Dendritic cell treated with granulocyte-macrophage colony-stimulating factor and Interleukin-4, amounts not matched to agents 40 ng/mL and 50 ng/mL, for 4 days (primary cell): ENCODE measurements at regions of chr5 and their contacts with region 1.

Region 1: DNA sequence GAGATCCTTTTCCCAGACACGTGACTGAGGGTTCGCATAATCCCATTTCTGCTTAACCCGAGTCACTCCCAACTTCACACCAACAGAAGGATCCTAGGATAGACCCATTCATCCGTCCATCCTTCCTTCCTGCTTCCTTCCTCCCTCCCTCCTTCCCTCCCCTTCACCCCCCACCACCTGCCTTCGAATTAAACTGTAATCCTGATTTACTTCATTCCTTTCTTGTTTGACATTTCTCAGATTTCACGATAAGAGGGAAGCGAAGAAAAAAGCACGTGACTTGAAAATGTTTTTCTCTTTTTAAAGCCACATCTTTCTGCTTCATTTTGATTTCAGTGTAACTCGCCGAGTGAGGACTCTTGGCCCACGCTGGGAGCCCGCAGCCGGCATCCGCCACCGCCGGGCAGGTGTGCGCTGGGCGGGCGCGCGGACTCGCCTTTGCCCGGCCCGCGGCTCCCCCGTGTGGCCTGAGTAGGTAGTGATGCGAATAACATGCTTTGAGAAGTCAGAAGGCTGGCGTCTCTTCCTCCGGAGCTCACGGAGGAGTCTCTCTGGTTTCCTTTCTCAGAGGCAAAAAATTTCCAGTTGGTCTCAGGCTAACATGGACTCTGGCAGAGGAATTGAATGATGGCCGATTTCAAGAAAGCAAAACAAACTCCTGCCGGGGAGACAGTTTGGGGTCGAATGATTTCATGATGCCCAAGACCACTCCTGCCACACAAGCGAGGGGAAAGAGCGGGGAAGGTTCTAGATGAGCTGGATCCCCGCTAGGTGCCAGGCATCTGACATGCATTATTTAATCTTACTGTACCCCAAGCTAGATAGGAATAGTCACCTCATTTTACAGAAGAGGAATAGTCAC is 117.7 kb downstream of the SLC12A2 start:
- H3K4me3 Mint-ChIP-seq: peak overlapping the region; percentile 68
- H3K27ac Mint-ChIP-seq: no peak overlapping the region
- H3K4me1 Mint-ChIP-seq: peaks cover 8% of the 10 kb centered on the region
- H3K27me3 Mint-ChIP-seq: peaks cover 7% of the 10 kb centered on the region

Region 2: DNA sequence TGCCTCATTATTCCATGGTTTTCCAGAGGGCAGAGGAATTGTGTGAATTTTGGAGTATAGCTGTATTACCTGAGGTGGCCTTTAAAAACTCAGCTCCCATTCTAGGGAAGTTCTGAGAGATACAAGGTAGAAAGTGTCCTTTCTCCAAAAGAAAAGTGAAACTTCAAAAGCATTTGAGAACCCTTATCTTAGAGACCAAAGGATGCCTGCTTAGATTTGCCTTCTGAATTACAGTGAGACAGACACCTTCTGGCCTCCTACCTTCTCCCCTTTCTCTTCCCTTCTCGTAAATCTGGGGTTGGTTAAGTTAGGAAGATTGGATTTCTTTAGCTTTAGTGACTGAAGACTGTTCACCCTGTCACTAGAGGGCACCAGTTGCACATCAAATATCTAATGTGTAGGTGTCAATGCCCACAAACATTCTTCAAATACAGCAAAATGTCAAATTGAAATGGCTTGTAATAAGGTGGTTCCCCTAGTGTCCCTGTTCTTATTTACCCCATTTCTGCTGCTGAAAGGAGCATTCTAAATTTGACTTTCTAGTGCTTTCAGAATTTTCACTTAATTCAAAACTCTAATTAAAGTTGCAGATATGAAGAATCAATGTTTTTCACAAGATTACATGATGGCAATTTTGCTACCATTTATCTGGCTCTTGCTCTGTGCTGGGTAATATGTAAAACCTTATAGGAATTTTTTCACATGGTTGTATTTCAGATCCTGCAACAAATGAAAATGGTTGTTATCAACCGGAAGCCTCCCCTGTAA is 637.1 kb before region 1 on chr5:
- intact Hi-C with region 1: loop called (anchors 2 kb)
- H3K4me3 Mint-ChIP-seq: no peak overlapping the region
- H3K27ac Mint-ChIP-seq: no peak overlapping the region
- H3K4me1 Mint-ChIP-seq: peaks cover 11% of the 10 kb centered on the region
- H3K27me3 Mint-ChIP-seq: no peaks in the 10 kb centered on the region

Region 3: GRCh38 chr5:127757576-127757975 is 443.7 kb before region 1 on chr5:
- intact Hi-C with region 1: loop called (anchors 5 kb)
- H3K4me3 Mint-ChIP-seq: no peak overlapping the region
- H3K27ac Mint-ChIP-seq: no peak overlapping the region
- H3K4me1 Mint-ChIP-seq: no peaks in the 10 kb centered on the region
- H3K27me3 Mint-ChIP-seq: no peaks in the 10 kb centered on the region

Region 4: DNA sequence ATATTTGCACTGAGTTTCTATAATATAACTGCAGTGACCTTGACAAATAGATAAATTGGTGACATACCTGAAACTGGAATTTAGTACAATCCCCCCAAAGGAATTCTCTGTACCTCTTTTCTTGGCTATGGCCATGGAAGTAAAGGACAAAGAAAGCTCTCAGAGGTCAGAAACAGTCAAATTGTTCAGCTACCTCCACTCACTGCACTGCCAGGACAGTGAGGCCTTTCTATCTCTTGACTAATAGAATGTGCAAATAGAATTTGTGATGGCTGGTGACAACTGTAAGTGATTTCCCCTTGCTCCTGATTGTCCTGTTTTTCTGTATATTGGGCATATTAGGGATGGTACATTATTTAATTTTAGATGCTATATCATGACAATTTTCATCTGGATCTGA is 431.0 kb before region 1 on chr5:
- intact Hi-C with region 1: no loop called
- H3K4me3 Mint-ChIP-seq: no peak overlapping the region
- H3K27ac Mint-ChIP-seq: no peak overlapping the region
- H3K4me1 Mint-ChIP-seq: no peaks in the 10 kb centered on the region
- H3K27me3 Mint-ChIP-seq: no peaks in the 10 kb centered on the region

Region 5: DNA sequence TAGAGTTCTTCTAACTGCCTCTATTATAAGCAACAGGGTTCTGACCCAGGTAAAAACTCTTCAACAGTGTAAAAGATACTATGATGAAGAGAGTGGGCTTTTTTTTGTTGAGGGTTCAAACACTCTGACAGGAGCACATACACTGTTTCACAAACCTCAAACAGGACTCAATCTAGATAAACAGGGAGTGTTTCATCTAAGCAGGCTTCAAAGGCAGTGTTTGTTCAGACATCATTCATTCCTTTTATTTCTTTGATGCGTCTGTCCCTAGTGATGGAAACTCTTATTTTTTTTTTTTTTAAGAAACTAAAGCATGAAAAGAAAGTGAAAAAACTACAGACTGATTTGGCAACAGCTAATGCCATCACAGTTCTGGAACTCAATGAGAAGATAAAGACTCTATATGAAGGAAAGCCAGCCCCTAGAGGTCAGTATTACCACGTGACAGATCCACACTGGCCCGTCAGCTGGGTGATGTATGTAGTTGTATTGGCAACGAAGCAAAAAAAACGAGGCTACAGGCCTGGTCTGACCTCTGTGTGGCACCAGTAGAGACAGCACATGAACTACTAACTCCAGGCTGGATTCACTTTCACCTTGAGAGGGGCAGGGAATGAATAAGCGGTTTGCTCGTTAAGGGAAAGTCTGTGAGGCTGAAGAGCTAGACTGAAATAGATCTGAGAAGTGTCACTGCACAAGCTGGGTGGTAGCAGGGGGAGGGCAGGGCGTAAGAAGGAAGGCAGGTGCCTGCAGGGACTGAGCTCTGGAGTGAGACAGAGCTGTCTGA is 325.9 kb before region 1 on chr5:
- intact Hi-C with region 1: loop called (anchors 5 kb)
- H3K4me3 Mint-ChIP-seq: no peak overlapping the region
- H3K27ac Mint-ChIP-seq: no peak overlapping the region
- H3K4me1 Mint-ChIP-seq: no peaks in the 10 kb centered on the region
- H3K27me3 Mint-ChIP-seq: no peaks in the 10 kb centered on the region